Left ventricle myocardium superior (tissue), 1 donor: ENCODE measurements at regions of chr17 and their contacts with region 1.

Region 1: GRCh38 chr17:64975329-64976087 is 56.2 kb upstream of the LRRC37A3 start:
- DNase-seq: peak; percentile 98
- ATAC-seq: peak; percentile 98

Region 2: DNA sequence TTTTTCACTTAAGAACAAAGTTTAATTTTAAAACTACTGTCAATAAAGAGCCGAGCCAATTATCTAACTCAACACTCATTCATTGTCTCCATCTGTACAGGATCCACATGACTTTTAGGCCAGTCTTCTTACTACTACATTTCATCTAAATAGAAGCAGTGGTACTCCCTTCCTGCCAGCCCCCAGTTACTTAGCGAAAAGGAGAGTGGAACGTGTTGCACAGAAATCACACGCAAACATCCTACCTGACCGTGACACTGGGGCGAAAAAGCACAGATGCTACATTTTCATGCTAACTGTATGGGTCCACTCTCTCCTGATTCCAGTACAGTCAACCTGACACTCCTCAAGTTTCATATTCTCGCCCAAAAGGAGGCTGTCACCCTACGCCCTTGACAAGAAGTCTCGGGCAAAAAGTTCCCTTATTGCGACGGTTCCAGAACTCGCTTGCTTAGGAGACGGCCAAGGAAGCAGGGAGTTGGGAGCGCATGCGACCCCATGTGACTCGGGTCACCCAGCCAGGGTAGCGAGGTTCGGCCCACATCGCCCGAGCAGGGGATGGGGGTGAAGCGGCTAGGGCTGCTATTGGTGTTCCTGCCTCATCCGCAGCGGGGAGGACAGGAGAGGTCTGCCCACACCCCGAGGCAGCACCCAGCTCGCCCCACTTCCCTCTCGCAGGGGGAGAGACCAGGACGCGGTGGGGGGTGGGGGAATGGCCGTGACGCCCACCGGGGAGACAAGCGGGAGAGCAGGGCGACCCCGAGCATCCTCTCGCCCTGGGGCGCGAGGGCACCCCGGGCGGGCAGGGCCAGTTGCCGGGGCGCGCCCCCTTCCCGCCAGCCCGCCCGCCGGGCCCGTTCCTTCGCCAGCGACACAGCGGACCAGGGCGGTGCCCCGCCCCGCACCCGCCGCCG is 80.1 kb after region 1 on chr17:
- intact Hi-C with region 1: loop called (anchors 10 kb)
- DNase-seq: peak; percentile 74
- ATAC-seq: peak; percentile 50